ENCODE measurements at regions of chr2 and their contacts with region 1.

Region 1: DNA sequence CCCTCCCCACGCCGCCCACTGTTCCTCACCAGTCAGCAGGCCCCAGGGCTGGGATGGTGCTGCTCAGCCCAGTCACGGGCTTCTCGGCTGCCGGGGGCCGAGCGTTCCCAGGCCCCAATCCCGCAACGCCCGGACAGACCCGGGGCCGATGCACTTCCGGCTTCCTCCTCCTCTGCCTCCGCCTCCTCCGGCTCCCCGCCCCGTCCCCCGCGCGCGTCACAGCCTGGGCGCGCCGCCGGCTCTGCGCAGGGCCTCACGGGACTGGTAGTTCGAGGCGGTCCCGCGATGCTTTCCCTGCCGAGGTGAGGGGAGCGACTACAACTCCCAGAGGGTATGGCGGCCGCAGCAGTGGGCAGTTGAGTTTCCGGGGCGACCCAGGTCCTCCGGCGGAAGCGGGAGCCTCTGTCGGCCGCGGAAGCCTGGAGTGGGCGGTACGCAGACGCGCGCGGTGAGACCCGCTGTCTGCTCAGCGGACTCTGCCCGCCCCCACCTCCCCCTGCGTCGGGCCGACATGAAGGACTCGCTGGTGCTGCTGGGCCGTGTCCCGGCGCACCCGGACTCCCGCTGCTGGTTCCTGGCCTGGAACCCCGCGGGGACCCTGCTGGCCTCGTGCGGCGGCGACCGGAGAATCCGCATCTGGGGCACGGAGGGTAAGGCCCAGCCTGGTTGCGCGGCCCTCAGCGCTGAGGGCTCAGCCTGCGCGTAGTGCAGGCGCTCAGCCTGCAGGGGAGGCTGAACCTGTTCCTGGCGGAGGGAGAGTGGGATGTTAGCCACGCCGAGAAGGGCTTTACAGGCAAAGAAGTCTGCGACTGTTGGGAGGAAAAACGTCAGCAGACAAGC is at the starts of genes CIAO1 and TMEM127:
- DNase-seq: peak; percentile 99
- H3K4me3 Mint-ChIP-seq: peak within 1 kb of the TSS; percentile 99
- H3K27ac Mint-ChIP-seq: peak within 1 kb of the TSS; percentile 94
- H3K4me1 Mint-ChIP-seq: peaks cover 47% of the 10 kb centered on the region
- H3K27me3 Mint-ChIP-seq: no peaks in the 10 kb centered on the region
- total RNA-seq, gene CIAO1: 64.4 to 67.4 TPM
- total RNA-seq, gene TMEM127: 42.4 to 44.0 TPM

Region 2: DNA sequence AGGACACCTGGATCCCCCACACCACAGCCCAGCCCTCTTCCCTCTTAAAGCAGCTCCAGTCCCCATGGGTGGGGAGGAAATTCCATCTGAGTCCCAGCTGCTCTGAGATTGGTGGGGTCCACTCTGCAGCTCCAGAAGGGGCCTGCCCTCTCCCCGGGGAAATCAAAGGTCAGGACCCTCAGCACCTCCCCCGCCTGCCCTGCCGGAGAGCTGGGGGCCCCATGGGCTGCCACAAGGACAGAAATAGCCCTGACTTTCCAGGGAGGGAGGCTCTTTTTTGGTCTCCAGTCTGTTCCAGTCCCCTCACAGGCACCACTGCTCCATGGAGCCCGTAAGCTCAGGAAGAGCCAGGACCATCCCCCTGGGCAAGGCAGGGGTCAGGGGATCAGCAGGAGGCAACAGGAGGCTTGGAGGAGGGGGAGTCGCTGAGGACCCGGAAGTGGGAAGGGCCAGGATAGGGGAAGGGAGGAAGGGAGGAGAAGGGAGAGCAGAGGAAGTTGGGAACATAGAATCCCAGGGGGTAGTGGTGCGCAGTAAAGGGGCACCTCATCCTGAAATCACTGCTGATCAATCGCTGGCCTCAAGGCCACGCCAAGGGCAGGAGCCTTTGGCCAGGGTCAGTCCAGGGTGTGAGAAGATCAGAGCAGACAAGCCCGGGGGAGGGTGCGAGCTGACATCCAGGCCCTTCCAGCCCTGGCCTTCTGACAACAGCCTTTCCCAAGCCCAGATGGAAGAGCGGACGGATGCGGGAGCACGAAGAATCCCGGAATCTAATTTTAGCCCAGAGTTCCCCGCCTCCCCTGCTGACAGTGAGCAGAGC is 157.3 kb before region 1 on chr2:
- CTCF ChIA-PET with region 1: no interaction called
- POLR2A ChIA-PET with region 1: no interaction called
- DNase-seq: no peak
- H3K4me3 Mint-ChIP-seq: no peak overlapping the region
- H3K27ac Mint-ChIP-seq: no peak overlapping the region
- H3K4me1 Mint-ChIP-seq: no peaks in the 10 kb centered on the region
- H3K27me3 Mint-ChIP-seq: no peaks in the 10 kb centered on the region

Region 3: DNA sequence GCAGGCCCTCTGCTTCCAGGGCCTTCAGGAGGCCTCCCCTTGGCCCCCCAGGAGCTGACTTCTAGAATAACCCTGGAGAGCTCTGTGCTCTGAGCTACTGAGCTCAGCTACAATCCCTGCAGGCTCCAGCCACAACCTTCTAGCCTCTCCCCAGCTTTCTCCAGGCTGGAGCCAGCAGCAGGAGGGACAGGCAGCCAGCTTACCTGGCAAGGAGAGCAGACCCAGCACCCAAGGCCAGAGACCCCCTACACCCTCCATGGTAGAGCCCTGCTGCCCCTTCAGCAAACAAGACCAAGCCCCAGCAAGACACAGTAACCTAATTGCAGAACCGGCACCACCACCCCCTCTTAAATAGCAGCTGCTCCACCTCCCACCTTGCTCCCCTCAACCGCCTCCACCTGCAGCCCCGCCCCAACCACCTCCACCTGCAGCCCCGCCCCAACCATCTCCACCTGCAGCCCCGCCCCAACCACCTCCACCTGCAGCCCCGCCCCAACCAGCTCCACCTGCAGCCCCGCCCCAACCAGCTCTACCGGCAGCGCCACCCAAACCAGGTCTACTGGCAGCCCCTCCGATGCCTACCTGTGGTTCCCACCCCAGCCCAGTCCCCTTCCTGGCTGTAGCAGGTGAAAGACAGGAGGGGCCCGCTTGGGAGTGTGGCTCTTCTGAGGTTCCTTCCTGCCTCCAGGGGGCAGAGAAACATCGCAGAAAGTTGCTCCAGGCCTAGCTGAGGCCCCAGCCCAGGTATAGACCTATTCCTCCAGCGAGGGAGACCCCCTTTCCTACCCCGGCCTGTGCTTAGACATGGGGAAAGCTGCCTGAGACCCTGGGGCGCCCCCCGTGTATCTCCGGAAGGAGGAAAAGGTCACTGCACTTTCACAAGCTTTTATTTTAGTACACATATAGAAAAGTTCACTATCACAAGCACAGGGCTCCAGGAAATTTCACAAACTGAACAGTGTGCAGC is 127.6 kb before region 1 on chr2 and contains the start of gene ASTL:
- CTCF ChIA-PET with region 1: interaction called, 16 read pairs
- POLR2A ChIA-PET with region 1: interaction called, 3 read pairs
- DNase-seq: peak; percentile 72
- H3K4me3 Mint-ChIP-seq: no peak within 1 kb of the TSS
- H3K27ac Mint-ChIP-seq: no peak within 1 kb of the TSS
- H3K4me1 Mint-ChIP-seq: peaks cover 19% of the 10 kb centered on the region
- H3K27me3 Mint-ChIP-seq: no peaks in the 10 kb centered on the region
- total RNA-seq, gene ASTL: 0.25 to 0.53 TPM

Region 4: GRCh38 chr2:96164459-96165184 is 101.4 kb before region 1 on chr2:
- CTCF ChIA-PET with region 1: no interaction called
- POLR2A ChIA-PET with region 1: no interaction called
- DNase-seq: peak; percentile 81
- H3K4me3 Mint-ChIP-seq: peak overlapping the region; percentile 66
- H3K27ac Mint-ChIP-seq: peak overlapping the region; percentile 94
- H3K4me1 Mint-ChIP-seq: peaks cover 52% of the 10 kb centered on the region
- H3K27me3 Mint-ChIP-seq: no peaks in the 10 kb centered on the region

Region 5: GRCh38 chr2:96241900-96242611 is 24.0 kb before region 1 on chr2:
- CTCF ChIA-PET with region 1: interaction called, 10 read pairs
- POLR2A ChIA-PET with region 1: interaction called, 9 read pairs
- DNase-seq: peak; percentile 77
- H3K4me3 Mint-ChIP-seq: peak overlapping the region; percentile 31
- H3K27ac Mint-ChIP-seq: peak overlapping the region; percentile 91
- H3K4me1 Mint-ChIP-seq: peaks cover 54% of the 10 kb centered on the region
- H3K27me3 Mint-ChIP-seq: no peaks in the 10 kb centered on the region

Region 6: DNA sequence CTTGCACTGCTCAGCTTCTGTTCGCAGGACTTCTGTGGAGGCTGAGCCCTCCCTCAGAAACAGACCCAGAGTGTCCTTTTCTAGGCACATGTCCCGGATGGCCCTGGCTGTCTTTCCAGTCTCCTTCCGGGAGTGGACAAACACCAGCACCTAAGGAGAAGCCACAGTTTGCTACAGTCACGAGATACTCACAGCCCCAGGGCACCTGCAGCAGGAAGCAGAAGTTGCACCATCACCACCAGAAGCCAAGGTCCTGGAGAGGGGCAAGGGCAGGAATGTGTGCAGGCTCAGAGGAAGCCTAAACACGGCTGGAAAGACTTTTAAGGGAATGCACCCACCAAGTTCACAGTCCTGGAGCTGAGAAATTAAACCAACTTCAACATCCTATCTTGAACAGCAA is 25.7 kb after region 1 on chr2:
- CTCF ChIA-PET with region 1: no interaction called
- POLR2A ChIA-PET with region 1: no interaction called
- DNase-seq: no peak
- H3K4me3 Mint-ChIP-seq: no peak overlapping the region
- H3K27ac Mint-ChIP-seq: no peak overlapping the region
- H3K4me1 Mint-ChIP-seq: no peaks in the 10 kb centered on the region
- H3K27me3 Mint-ChIP-seq: no peaks in the 10 kb centered on the region

Region 7: DNA sequence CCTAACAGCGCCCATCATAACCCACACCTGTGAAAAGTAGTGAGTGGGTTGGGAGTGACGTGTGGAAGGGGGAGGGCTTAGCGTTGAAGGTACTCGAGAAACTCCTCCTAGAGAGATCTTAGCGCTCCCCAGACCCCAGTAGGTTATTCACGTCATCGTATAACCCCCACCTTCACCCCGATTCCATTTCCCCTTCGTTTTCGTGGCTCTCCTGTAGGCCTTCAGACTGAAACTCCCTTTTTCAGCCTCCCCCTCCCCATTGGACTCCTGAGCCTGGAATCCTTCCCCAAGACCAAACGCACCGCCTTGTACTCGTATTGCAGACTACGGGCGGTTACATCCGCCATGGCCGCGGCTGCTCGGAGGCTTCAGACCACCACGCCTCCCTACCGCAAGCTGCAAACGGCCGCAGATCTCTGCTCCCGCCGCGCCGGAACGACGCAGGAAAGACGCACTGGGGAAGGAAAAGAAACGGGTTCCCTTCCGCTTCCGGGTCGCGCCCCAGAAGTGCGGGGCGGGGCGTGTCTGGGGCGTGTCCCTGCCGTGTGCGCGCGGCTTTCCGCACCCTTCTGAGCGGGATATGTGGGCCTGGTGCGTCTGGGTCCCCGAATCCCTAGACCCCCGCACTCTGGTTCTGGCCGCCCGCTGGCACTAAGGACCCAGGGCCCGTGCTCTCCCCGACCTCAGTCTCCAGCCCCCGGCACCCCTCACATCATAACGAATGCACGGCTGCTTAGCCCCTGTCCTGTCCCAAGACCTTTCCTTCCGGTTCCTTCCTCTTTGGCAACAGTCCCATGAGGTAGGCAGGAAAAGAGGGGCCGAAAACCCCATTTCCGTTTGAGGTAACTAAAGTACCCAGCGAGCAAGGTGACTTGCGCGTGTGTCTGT is 39.3 kb after region 1 on chr2 and contains the start of gene SNRNP200:
- CTCF ChIA-PET with region 1: interaction called, 5 read pairs
- POLR2A ChIA-PET with region 1: interaction called, 14 read pairs
- DNase-seq: peak; percentile 93
- H3K4me3 Mint-ChIP-seq: peak within 1 kb of the TSS; percentile 100
- H3K27ac Mint-ChIP-seq: peak within 1 kb of the TSS; percentile 98
- H3K4me1 Mint-ChIP-seq: peaks cover 71% of the 10 kb centered on the region
- H3K27me3 Mint-ChIP-seq: no peaks in the 10 kb centered on the region
- total RNA-seq, gene SNRNP200: 149 to 156 TPM

Region 8: GRCh38 chr2:96320728-96321622 is 54.9 kb after region 1 on chr2:
- CTCF ChIA-PET with region 1: interaction called, 4 read pairs
- POLR2A ChIA-PET with region 1: interaction called, 14 read pairs
- DNase-seq: peak; percentile 46
- H3K4me3 Mint-ChIP-seq: peak overlapping the region; percentile 80
- H3K27ac Mint-ChIP-seq: peak overlapping the region; percentile 84
- H3K4me1 Mint-ChIP-seq: peaks cover 70% of the 10 kb centered on the region
- H3K27me3 Mint-ChIP-seq: no peaks in the 10 kb centered on the region

Region 9: GRCh38 chr2:96336104-96336775 is 70.2 kb after region 1 on chr2:
- CTCF ChIA-PET with region 1: interaction called, 3 read pairs
- POLR2A ChIA-PET with region 1: interaction called, 12 read pairs
- DNase-seq: no peak
- H3K4me3 Mint-ChIP-seq: peak overlapping the region; percentile 81
- H3K27ac Mint-ChIP-seq: peak overlapping the region; percentile 73
- H3K4me1 Mint-ChIP-seq: peaks cover 66% of the 10 kb centered on the region
- H3K27me3 Mint-ChIP-seq: no peaks in the 10 kb centered on the region